ENCODE measurements at regions of chr10 and their contacts with region 1.

Region 1: DNA sequence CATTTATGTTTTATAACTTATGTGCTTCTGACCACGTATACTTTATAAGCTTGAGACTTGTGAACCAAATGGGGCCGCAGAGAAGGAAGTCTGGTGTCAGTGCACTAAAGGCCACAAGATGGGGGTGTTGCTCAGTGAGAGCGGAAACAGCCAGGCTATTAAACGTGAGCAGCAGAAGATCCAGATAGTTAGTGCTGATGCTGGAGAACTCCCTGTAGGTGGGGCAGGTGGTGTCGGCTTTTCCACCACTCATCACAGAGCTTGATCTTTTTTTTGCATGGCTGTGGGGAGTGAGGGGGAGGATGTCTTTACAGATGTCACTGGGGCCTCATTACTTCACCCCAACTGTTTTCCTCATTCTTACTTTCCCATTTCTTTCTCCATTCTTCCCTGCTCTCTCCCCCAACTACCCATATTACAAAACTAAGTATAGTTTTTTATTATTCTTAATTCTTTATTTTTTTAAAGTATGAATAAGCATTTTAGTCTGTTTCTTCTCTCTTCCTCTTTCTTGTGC is 34.7 kb downstream of the ACADSB start:
- DNase-seq: peak; percentile 67
- H3K4me3 ChIP-seq: 0 out of 4 replicates have a peak overlapping the region, but pooled peaks of 1 of the 2 experiments have one; percentile 27
- H3K27ac ChIP-seq: no peak overlapping the region
- H3K4me1 ChIP-seq: no peaks in the 10 kb centered on the region
- H3K27me3 ChIP-seq: no peaks in the 10 kb centered on the region
- CTCF ChIP-seq: peak; percentile 75
- EP300 ChIP-seq: no peak
- RAD21 ChIP-seq: peak; percentile 85

Region 2: DNA sequence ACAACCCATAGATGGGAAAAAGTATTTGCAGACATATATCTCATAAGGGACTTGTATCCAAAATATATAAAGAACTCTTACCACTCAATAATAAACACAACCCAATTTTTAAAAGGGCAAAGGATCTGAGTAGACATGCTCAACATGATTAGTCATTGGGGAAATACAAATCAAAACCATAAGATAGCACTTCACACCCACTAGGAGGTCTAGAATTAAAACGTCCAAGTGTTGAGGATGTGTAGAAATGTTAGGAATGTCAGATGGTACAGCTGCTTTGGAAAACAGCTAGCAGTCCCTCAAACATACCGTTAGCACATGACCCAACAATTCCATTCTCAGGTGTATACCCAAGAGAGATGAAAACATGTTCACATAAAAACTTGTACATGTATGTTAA is 55.0 kb before region 1 on chr10:
- CTCF ChIA-PET with region 1: no interaction called
- POLR2A ChIA-PET with region 1: no interaction called
- DNase-seq: no peak
- H3K4me3 ChIP-seq: no peak overlapping the region
- H3K27ac ChIP-seq: no peak overlapping the region
- H3K4me1 ChIP-seq: no peaks in the 10 kb centered on the region; a peak in 2 of 4 replicates
- H3K27me3 ChIP-seq: no peaks in the 10 kb centered on the region
- CTCF ChIP-seq: no peak
- EP300 ChIP-seq: no peak
- RAD21 ChIP-seq: no peak

Region 3: DNA sequence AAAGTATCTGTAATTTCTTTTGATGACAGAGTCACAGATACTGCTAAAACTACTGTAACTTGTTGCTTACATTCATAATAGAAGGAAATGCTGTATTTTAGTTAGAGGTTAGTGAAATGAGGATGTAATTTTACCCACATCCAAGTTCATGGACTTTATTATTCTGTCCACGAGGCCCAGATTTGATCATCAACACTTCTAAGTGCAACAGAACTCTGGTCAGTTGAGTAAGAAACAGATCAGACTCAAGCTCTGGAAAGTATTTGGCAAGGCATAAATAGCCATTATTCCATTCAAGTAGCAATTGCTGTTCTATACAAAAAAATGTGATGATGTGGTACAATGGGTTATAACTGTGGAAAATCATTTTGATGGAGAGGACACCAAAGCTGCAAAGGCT is 12.3 kb before region 1 on chr10:
- CTCF ChIA-PET with region 1: interaction called, 18 read pairs
- POLR2A ChIA-PET with region 1: no interaction called
- DNase-seq: no peak
- H3K4me3 ChIP-seq: no peak overlapping the region
- H3K27ac ChIP-seq: no peak overlapping the region
- H3K4me1 ChIP-seq: no peaks in the 10 kb centered on the region; a peak in 1 of 4 replicates
- H3K27me3 ChIP-seq: no peaks in the 10 kb centered on the region
- CTCF ChIP-seq: no peak
- EP300 ChIP-seq: no peak
- RAD21 ChIP-seq: no peak

Region 4: GRCh38 chr10:123132576-123133477 is 89.4 kb after region 1 on chr10:
- CTCF ChIA-PET with region 1: interaction called, 20 read pairs
- POLR2A ChIA-PET with region 1: no interaction called
- DNase-seq: peak; percentile 89
- H3K4me3 ChIP-seq: peak overlapping the region; percentile 39 to 57
- H3K27ac ChIP-seq: no peak overlapping the region
- H3K4me1 ChIP-seq: peaks cover 0 to 8% of the 10 kb centered on the region in 2 experiments; a peak in 2 of 4 replicates
- H3K27me3 ChIP-seq: peaks cover 65% of the 10 kb centered on the region
- CTCF ChIP-seq: peak; percentile 92
- EP300 ChIP-seq: no peak
- RAD21 ChIP-seq: peak; percentile 91

Region 5: GRCh38 chr10:123203393-123204134 is 160.1 kb after region 1 on chr10:
- CTCF ChIA-PET with region 1: no interaction called
- POLR2A ChIA-PET with region 1: no interaction called
- DNase-seq: no peak
- H3K4me3 ChIP-seq: no peak overlapping the region
- H3K27ac ChIP-seq: no peak overlapping the region
- H3K4me1 ChIP-seq: no peaks in the 10 kb centered on the region; a peak in 1 of 4 replicates
- H3K27me3 ChIP-seq: no peaks in the 10 kb centered on the region
- CTCF ChIP-seq: no peak
- EP300 ChIP-seq: no peak
- RAD21 ChIP-seq: no peak

Region 6: DNA sequence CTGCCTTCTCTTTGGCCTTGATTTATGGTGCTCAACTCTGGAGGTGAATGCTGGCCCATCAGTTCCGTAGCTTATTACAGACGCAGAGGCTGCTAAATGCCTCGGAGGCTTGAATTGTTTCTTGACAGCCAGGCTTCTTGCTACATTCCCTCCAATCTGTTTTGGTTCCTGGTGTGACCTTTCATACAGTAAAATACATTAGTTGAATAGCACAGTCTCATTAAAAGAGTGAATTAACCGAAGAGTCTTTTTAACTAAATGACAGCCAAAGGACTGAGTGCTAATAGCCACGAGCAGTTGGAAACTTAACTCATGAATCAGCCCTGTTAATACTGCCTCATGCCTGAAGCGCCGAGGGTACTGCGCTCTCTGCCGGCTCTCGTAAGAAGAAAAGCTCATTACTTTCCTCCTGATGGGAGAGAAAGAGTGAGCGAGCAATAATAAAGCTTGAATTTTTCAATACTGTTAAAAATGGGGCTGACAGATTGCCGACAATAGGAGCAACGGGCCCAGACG is 386.3 kb after region 1 on chr10:
- CTCF ChIA-PET with region 1: interaction called, 14 read pairs
- POLR2A ChIA-PET with region 1: no interaction called
- DNase-seq: peak; percentile 48
- H3K4me3 ChIP-seq: no peak overlapping the region
- H3K27ac ChIP-seq: peak overlapping the region in 1 of 2 experiments; percentile 58; a peak in 1 of 4 replicates
- H3K4me1 ChIP-seq: peaks cover 0 to 18% of the 10 kb centered on the region in 2 experiments; a peak in 2 of 4 replicates
- H3K27me3 ChIP-seq: no peaks in the 10 kb centered on the region
- CTCF ChIP-seq: no peak
- EP300 ChIP-seq: no peak
- RAD21 ChIP-seq: peak; percentile 44; the same call in 1 of the 2 replicates